Right ventricle myocardium inferior (tissue), 1 donor: ENCODE measurements at regions of chr1 and their contacts with region 1.

Region 1: DNA sequence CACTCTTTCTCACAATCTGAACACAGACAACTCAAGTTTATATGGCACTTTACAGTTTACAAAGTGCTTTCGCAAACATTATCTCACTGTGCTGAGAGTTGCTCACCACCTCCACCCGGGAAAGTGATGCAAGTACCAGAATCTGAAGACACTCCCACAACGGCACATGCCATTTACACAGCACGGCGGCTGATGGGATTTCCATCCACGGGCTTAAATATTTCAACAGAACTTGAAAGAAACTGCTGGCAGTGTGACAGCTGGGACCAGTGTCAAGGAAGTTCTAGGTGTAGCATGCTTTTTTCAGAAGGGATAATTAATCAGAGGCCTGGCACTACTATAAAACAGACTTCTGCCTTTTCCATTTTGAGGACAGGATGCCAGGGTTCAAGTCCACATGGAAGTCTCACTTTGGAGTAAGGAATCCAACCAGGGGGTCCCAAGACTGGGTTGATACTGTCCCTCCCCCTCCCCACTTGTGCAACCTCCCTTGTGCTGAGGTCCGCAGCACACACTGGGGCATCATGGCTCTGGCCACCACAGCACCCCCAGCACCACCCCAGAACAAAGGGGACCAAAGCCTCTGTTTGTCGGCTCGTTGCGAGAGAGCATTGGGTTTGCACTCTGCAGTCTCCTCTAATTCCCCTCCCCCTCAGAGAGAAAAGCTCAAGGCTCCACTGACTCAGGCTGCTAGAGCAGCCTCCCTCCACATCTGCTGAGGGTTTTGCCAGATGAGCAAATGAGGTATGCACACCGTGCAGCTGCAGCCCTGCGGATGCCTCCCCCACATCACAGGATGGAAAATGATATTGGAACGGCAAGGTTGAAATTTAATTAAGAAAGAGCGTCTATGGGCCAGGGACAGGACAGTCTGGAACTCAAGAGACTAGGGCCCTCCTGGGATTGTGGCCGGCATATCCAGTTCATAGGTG is 154.9 kb downstream of the TGFBR3 start:
- DNase-seq: no peak
- ATAC-seq: peak; percentile 4

Region 2: DNA sequence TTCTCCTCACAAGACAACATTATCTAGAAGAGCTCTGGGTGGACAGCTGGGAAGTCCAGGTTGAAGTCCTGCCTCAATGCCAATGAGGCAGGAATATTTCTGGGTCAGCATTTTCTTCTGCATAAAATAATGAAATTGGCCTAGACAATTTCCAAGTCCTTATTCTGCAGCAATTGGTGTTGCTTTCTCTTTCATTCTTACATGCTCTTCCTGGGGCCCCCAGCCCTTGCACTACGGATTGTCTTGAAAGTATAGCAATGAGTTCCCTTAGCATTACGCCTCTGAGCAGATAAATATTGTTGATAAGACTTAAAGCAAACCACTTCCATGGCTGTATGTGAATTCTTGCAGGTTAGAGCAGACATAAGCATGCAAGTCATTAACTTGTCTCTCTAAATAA is 33.7 kb before region 1 on chr1:
- intact Hi-C with region 1: loop called (anchors 1 kb)
- DNase-seq: no peak
- ATAC-seq: no peak